Gastrocnemius medialis (tissue), 4 donors: ENCODE measurements at regions of chr4 and their contacts with region 1.

Region 1: GRCh38 chr4:148044912-148045352 is 313.0 kb downstream of the ARHGAP10 start:
- DNase-seq: peak in 1 of 2 donors; percentile 57
- ATAC-seq: peak; percentile 58 to 60
- H3K4me3 ChIP-seq: peak overlapping the region; percentile 42 to 48 (median 47)
- H3K27ac ChIP-seq: peak overlapping the region; percentile 88 to 93 (median 91)
- H3K4me1 ChIP-seq: peaks cover 35 to 39% of the 10 kb centered on the region in 2 donors
- H3K27me3 ChIP-seq: no peaks in the 10 kb centered on the region
- CTCF ChIP-seq: no peak
- POLR2A ChIP-seq: no peak

Region 2: GRCh38 chr4:147780137-147780777 is 264.7 kb before region 1 on chr4:
- in situ Hi-C with region 1: no loop called
- intact Hi-C with region 1: no loop called
- DNase-seq: peak in 1 of 2 donors; percentile 23
- ATAC-seq: no peak
- H3K4me3 ChIP-seq: no peak overlapping the region
- H3K27ac ChIP-seq: peak overlapping the region; percentile 10 to 48 (median 27)
- H3K4me1 ChIP-seq: peaks cover 34 to 54% of the 10 kb centered on the region in 2 donors
- H3K27me3 ChIP-seq: no peaks in the 10 kb centered on the region
- CTCF ChIP-seq: no peak
- POLR2A ChIP-seq: no peak

Region 3: GRCh38 chr4:147799986-147800555 is 244.9 kb before region 1 on chr4:
- in situ Hi-C with region 1: no loop called
- intact Hi-C with region 1: no loop called
- DNase-seq: no peak
- ATAC-seq: peak in 1 of 2 donors; percentile 63
- H3K4me3 ChIP-seq: no peak overlapping the region
- H3K27ac ChIP-seq: peak overlapping the region; percentile 51 to 69 (median 66)
- H3K4me1 ChIP-seq: peaks cover 53% of the 10 kb centered on the region in 2 donors
- H3K27me3 ChIP-seq: no peaks in the 10 kb centered on the region
- CTCF ChIP-seq: no peak
- POLR2A ChIP-seq: no peak

Region 4: GRCh38 chr4:147822128-147822527 is 222.8 kb before region 1 on chr4:
- in situ Hi-C with region 1: no loop called
- intact Hi-C with region 1: loop called (anchors 10 kb)
- DNase-seq: peak; percentile 94 to 95
- ATAC-seq: peak; percentile 81 to 89
- H3K4me3 ChIP-seq: no peak overlapping the region
- H3K27ac ChIP-seq: peak overlapping the region; percentile 83 to 95 (median 92)
- H3K4me1 ChIP-seq: peaks cover 60 to 61% of the 10 kb centered on the region in 2 donors
- H3K27me3 ChIP-seq: no peaks in the 10 kb centered on the region
- CTCF ChIP-seq: no peak
- POLR2A ChIP-seq: no peak

Region 5: GRCh38 chr4:148007303-148007702 is 37.6 kb before region 1 on chr4:
- in situ Hi-C with region 1: loop called in 1 of 4 experiments (anchors 5 kb)
- intact Hi-C with region 1: loop called (anchors 1 kb)
- DNase-seq: peak; percentile 82 to 83
- ATAC-seq: peak; percentile 96 to 99
- H3K4me3 ChIP-seq: peak overlapping the region in 1 of 4 donors; percentile 10
- H3K27ac ChIP-seq: peak overlapping the region; percentile 74 to 88 (median 76)
- H3K4me1 ChIP-seq: peaks cover 45 to 52% of the 10 kb centered on the region in 2 donors
- H3K27me3 ChIP-seq: no peaks in the 10 kb centered on the region
- CTCF ChIP-seq: no peak
- POLR2A ChIP-seq: no peak

Region 6: GRCh38 chr4:148017836-148018235 is 27.1 kb before region 1 on chr4:
- in situ Hi-C with region 1: no loop called
- intact Hi-C with region 1: no loop called
- DNase-seq: peak in 1 of 2 donors; percentile 26
- ATAC-seq: peak; percentile 48 to 52
- H3K4me3 ChIP-seq: no peak overlapping the region
- H3K27ac ChIP-seq: peak overlapping the region; percentile 52 to 75 (median 59)
- H3K4me1 ChIP-seq: peaks cover 37 to 42% of the 10 kb centered on the region in 2 donors
- H3K27me3 ChIP-seq: no peaks in the 10 kb centered on the region
- CTCF ChIP-seq: no peak
- POLR2A ChIP-seq: no peak

Region 7: GRCh38 chr4:148029781-148030180 is 15.2 kb before region 1 on chr4:
- in situ Hi-C with region 1: no loop called
- intact Hi-C with region 1: loop called (anchors 2 kb)
- DNase-seq: no peak
- ATAC-seq: no peak
- H3K4me3 ChIP-seq: no peak overlapping the region
- H3K27ac ChIP-seq: peak overlapping the region; percentile 51 to 76 (median 56)
- H3K4me1 ChIP-seq: peaks cover 43 to 48% of the 10 kb centered on the region in 2 donors
- H3K27me3 ChIP-seq: no peaks in the 10 kb centered on the region
- CTCF ChIP-seq: no peak
- POLR2A ChIP-seq: no peak

Region 8: DNA sequence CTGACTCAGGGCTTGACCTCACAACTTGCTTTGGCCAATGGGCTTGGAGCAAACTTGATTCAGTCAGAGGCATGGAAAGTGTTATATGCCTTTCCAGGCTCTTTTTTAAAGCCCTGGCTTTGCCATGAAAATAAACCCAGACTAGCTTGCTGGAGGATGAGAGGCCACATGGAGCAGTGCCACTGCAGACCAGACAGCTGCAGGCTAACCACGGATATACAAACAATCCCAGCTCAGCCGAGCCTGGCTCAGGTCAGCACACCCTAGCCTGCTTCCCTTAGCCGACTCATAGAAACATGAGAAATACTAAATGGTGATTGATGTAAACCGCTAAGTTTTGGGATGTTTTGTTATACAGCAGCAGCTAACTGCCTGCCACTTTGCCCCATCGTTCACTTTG is 32.0 kb after region 1 on chr4:
- in situ Hi-C with region 1: no loop called
- intact Hi-C with region 1: no loop called
- DNase-seq: no peak
- ATAC-seq: no peak
- H3K4me3 ChIP-seq: no peak overlapping the region
- H3K27ac ChIP-seq: peak overlapping the region in 1 of 4 donors; percentile 2
- H3K4me1 ChIP-seq: peaks cover 26 to 27% of the 10 kb centered on the region in 2 donors
- H3K27me3 ChIP-seq: no peaks in the 10 kb centered on the region
- CTCF ChIP-seq: no peak
- POLR2A ChIP-seq: no peak